Endothelial cell of umbilical vein (primary cell): ENCODE measurements at regions of chr6 and their contacts with region 1.

Region 1: DNA sequence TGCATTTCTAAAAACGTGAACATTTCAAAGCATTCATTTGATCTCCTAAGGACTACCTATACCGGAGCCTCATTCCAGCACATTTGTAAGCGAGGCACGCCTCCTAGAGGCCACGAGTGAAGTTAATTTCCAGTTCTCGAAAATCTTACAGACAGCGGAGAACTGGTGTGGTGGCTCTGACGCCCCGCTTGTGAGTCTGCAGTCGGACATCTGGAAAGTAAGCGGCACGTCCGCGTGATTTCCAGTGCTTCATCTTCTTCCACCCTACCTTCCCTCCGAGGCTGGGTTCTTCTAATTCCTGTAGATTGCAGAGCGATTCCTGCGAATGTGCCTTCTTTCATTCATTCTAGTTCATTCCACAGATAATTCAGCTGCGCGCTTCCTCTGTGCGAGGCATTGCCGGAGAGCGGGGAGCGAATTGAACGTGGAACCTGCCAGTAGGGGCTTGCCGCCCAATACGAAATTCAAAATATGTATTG is 810 bp upstream of the PRIM2 start:
- DNase-seq: peak; percentile 94
- H3K4me3 ChIP-seq: peak overlapping the region; percentile 25 to 92 (median 53)
- H3K27ac ChIP-seq: peak overlapping the region; percentile 44
- H3K4me1 ChIP-seq: peaks cover 34% of the 10 kb centered on the region
- H3K27me3 ChIP-seq: no peaks in the 10 kb centered on the region
- CTCF ChIP-seq: peak; percentile 64 to 79
- POLR2A ChIP-seq: no peak

Region 2: GRCh38 chr6:56637640-56638039 is 679.0 kb before region 1 on chr6:
- CTCF ChIA-PET with region 1: interaction called, 7 read pairs
- POLR2A ChIA-PET with region 1: no interaction called
- dilution Hi-C with region 1: no loop called
- intact Hi-C with region 1: loop called (anchors 10 kb)
- DNase-seq: peak; percentile 83
- H3K4me3 ChIP-seq: no peak overlapping the region
- H3K27ac ChIP-seq: no peak overlapping the region
- H3K4me1 ChIP-seq: peaks cover 4% of the 10 kb centered on the region
- H3K27me3 ChIP-seq: no peaks in the 10 kb centered on the region
- CTCF ChIP-seq: peak; percentile 41 to 42
- POLR2A ChIP-seq: no peak

Region 3: GRCh38 chr6:56955171-56956045 is 361.2 kb before region 1 on chr6:
- CTCF ChIA-PET with region 1: interaction called, 15 read pairs
- POLR2A ChIA-PET with region 1: interaction called, 4 read pairs
- dilution Hi-C with region 1: no loop called
- intact Hi-C with region 1: loop called (anchors 1 kb)
- DNase-seq: peak; percentile 83
- H3K4me3 ChIP-seq: peak overlapping the region; percentile 43 to 83 (median 75)
- H3K27ac ChIP-seq: peak overlapping the region; percentile 52
- H3K4me1 ChIP-seq: peaks cover 17% of the 10 kb centered on the region
- H3K27me3 ChIP-seq: no peaks in the 10 kb centered on the region
- CTCF ChIP-seq: peak; percentile 82 to 88
- POLR2A ChIP-seq: no peak

Region 4: GRCh38 chr6:57089687-57090460 is 226.7 kb before region 1 on chr6 and contains the start of gene ZNF451:
- CTCF ChIA-PET with region 1: interaction called, 4 read pairs
- POLR2A ChIA-PET with region 1: no interaction called
- dilution Hi-C with region 1: no loop called
- intact Hi-C with region 1: loop called (anchors 5 kb)
- DNase-seq: peak; percentile 99
- H3K4me3 ChIP-seq: peak within 1 kb of the TSS; percentile 57 to 70 (median 63)
- H3K27ac ChIP-seq: peak within 1 kb of the TSS; percentile 69
- H3K4me1 ChIP-seq: peaks cover 30% of the 10 kb centered on the region
- H3K27me3 ChIP-seq: no peaks in the 10 kb centered on the region
- CTCF ChIP-seq: no peak
- POLR2A ChIP-seq: peak; percentile 49
- total RNA-seq, gene ZNF451: 54.2 and 64.4 TPM in 2 replicates

Region 5: DNA sequence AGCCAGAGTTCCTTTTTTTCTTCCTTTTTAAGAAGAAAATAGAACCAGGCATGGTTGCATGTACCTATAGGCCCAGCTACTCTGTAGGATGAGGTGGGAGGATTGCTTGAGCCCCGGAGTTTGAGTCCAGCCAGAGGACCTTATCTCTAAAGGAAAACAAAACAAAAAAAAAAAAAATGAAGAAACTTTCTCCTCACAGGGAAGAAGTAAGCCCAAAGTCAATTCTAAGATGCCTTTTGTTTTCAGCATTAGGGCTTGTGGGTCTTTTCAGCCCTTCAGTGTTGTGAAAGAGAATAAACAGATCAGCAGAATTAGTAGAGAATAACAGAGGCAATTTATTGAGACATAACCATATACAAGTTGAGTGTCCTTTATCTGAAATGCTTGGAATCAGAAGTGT is 199.8 kb before region 1 on chr6:
- CTCF ChIA-PET with region 1: no interaction called
- POLR2A ChIA-PET with region 1: no interaction called
- dilution Hi-C with region 1: no loop called
- intact Hi-C with region 1: no loop called
- DNase-seq: no peak
- H3K4me3 ChIP-seq: no peak overlapping the region
- H3K27ac ChIP-seq: no peak overlapping the region
- H3K4me1 ChIP-seq: no peaks in the 10 kb centered on the region
- H3K27me3 ChIP-seq: no peaks in the 10 kb centered on the region
- CTCF ChIP-seq: no peak
- POLR2A ChIP-seq: no peak

Region 6: GRCh38 chr6:57190140-57190539 is 126.5 kb before region 1 on chr6:
- CTCF ChIA-PET with region 1: interaction called, 79 read pairs
- POLR2A ChIA-PET with region 1: no interaction called
- dilution Hi-C with region 1: no loop called
- intact Hi-C with region 1: loop called (anchors 1 kb)
- DNase-seq: peak; percentile 21
- H3K4me3 ChIP-seq: no peak overlapping the region
- H3K27ac ChIP-seq: no peak overlapping the region
- H3K4me1 ChIP-seq: no peaks in the 10 kb centered on the region
- H3K27me3 ChIP-seq: no peaks in the 10 kb centered on the region
- CTCF ChIP-seq: no peak
- POLR2A ChIP-seq: no peak

Region 7: DNA sequence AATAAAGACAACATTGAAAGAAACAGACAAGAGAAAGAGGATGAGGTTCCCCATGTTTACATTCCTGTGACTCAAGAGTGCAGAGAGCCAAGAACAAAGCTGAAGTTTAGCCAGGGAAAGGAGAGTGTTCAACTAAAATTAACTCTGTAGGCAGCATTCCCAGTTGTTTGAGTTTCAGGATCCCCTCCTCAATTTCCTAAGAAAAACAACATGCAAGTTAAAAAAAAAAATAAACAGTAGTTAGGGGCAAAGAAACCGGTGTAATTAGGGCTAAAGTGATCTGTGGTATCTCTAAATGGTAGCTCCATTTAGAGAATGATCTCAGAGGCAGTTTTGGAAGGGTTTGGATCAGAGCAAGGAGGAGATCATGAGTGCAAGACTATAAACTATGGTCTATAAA is 63.6 kb before region 1 on chr6:
- CTCF ChIA-PET with region 1: no interaction called
- POLR2A ChIA-PET with region 1: no interaction called
- dilution Hi-C with region 1: no loop called
- intact Hi-C with region 1: no loop called
- DNase-seq: no peak
- H3K4me3 ChIP-seq: no peak overlapping the region
- H3K27ac ChIP-seq: no peak overlapping the region
- H3K4me1 ChIP-seq: no peaks in the 10 kb centered on the region
- H3K27me3 ChIP-seq: peaks cover 0 to under 1% of the 10 kb centered on the region in 2 experiments
- CTCF ChIP-seq: no peak
- POLR2A ChIP-seq: no peak

Region 8: GRCh38 chr6:57267586-57268293 is 48.9 kb before region 1 on chr6:
- CTCF ChIA-PET with region 1: interaction called, 51 read pairs
- POLR2A ChIA-PET with region 1: interaction called, 3 read pairs
- dilution Hi-C with region 1: no loop called
- intact Hi-C with region 1: loop called (anchors 1 kb)
- DNase-seq: peak; percentile 86
- H3K4me3 ChIP-seq: no peak overlapping the region
- H3K27ac ChIP-seq: peak overlapping the region; percentile 35
- H3K4me1 ChIP-seq: peaks cover 22% of the 10 kb centered on the region
- H3K27me3 ChIP-seq: no peaks in the 10 kb centered on the region
- CTCF ChIP-seq: peak; percentile 49 to 57
- POLR2A ChIP-seq: no peak